HEK293 (cell line): ENCODE measurements at regions of chr16 and their contacts with region 1.

Region 1: GRCh38 chr16:2155091-2156021 is at the start of gene TRAF7:
- H3K4me3 ChIP-seq: peak within 1 kb of the TSS; percentile 77
- H3K27ac ChIP-seq: peak within 1 kb of the TSS; percentile 64
- H3K4me1 ChIP-seq: no peaks in the 10 kb centered on the region
- CTCF ChIP-seq: no peak

Region 2: GRCh38 chr16:1763521-1764511 is 391.5 kb before region 1 on chr16:
- CTCF ChIA-PET with region 1: no interaction called
- POLR2A ChIA-PET with region 1: no interaction called
- H3K4me3 ChIP-seq: no peak overlapping the region
- H3K27ac ChIP-seq: no peak overlapping the region
- H3K4me1 ChIP-seq: no peaks in the 10 kb centered on the region
- CTCF ChIP-seq: peak; percentile 34

Region 3: GRCh38 chr16:1782352-1783091 is 372.8 kb before region 1 on chr16 and contains the starts of genes NUBP2 and SPSB3:
- CTCF ChIA-PET with region 1: no interaction called
- POLR2A ChIA-PET with region 1: interaction called, 15 read pairs
- H3K4me3 ChIP-seq: peak within 1 kb of the TSS; percentile 90
- H3K27ac ChIP-seq: peak within 1 kb of the TSS; percentile 87
- H3K4me1 ChIP-seq: peaks cover 6% of the 10 kb centered on the region
- CTCF ChIP-seq: no peak

Region 4: DNA sequence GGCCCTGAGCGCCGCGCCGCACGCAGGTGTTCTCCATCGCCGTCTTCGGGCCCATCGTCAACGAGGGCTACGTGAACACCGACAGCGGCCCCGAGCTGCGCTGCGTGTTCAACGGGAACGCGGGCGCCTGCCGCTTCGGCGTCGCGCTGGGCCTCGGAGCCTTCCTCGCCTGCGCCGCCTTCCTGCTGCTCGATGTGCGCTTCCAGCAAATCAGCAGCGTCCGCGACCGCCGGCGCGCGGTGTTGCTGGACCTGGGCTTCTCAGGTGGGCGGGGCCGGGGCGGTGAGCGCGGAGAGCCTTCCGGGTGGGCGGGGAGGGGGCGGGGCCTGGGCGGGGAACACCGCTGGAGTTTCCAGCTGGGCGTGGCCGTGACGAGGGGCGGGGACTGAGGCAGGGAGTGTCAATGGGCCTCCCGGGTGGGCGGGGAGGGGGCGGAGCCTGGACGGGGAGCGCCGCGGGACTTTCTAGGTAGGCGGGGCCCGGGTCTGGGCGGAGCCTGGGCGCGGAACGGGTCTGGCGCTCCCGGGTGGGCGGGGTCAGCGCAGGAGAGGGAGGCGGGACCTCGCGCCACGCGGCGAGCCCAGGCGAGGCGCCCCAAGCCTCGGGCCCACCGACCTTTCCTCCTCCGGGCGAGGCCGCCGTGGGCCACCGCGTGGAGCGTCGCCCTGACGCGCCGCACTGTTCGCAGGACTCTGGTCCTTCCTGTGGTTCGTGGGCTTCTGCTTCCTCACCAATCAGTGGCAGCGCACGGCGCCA is 163.2 kb before region 1 on chr16:
- CTCF ChIA-PET with region 1: no interaction called
- POLR2A ChIA-PET with region 1: interaction called, 12 read pairs
- H3K4me3 ChIP-seq: no peak overlapping the region
- H3K27ac ChIP-seq: no peak overlapping the region
- H3K4me1 ChIP-seq: peaks cover 3% of the 10 kb centered on the region
- CTCF ChIP-seq: no peak

Region 5: GRCh38 chr16:2016407-2016922 is 138.9 kb before region 1 on chr16:
- CTCF ChIA-PET with region 1: interaction called, 3 read pairs
- POLR2A ChIA-PET with region 1: interaction called, 20 read pairs
- H3K4me3 ChIP-seq: no peak overlapping the region
- H3K27ac ChIP-seq: no peak overlapping the region
- H3K4me1 ChIP-seq: peaks cover 6% of the 10 kb centered on the region
- CTCF ChIP-seq: peak; percentile 52

Region 6: DNA sequence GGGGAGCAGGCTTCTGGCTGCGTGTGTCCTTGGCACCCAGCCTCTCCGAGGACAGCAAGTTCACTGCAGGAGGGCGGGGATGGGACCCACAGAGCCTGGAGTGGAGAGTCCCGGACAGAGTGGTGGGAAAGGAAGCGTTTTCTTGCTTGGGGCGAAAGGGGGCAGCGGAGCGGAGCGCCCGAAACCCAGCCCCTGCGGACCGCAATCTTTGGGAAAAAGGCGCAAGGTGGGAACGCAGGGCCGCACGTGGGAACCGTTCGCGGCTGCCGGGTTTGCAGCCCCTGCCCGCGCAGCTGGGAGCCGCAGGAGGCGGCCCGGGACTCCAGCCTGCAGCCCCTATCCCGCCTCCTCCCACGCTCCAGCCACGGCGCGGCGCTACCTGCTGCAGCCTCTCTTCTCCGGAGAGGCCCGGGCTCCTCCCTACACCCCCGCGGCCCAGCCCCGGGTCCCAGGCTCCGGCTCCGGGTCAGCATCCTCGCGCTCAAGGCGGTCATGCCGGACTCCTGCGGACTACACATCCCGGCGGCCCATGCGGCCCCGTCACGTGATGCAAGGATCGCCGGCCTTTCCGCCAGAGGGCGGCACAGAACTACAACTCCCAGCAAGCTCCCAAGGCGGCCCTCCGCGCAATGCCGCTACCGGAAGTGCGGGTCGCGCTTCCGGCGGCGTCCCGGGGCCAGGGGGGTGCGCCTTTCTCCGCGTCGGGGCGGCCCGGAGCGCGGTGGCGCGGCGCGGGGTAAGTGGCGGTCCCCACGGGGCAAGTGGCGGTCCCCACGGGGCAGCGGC is 107.8 kb before region 1 on chr16 and contains the starts of genes NTHL1 and TSC2:
- CTCF ChIA-PET with region 1: no interaction called
- POLR2A ChIA-PET with region 1: interaction called, 37 read pairs
- H3K4me3 ChIP-seq: peak within 1 kb of the TSS; percentile 82
- H3K27ac ChIP-seq: peak within 1 kb of the TSS; percentile 58; the same call in 1 of the 2 replicates
- H3K4me1 ChIP-seq: no peaks in the 10 kb centered on the region
- CTCF ChIP-seq: peak; percentile 90

Region 7: GRCh38 chr16:2180962-2181923 is 25.9 kb after region 1 on chr16:
- CTCF ChIA-PET with region 1: no interaction called
- POLR2A ChIA-PET with region 1: interaction called, 13 read pairs
- H3K4me3 ChIP-seq: no peak overlapping the region
- H3K27ac ChIP-seq: no peak overlapping the region
- H3K4me1 ChIP-seq: no peaks in the 10 kb centered on the region
- CTCF ChIP-seq: no peak

Region 8: GRCh38 chr16:2205104-2205966 is 50.0 kb after region 1 on chr16 and contains the start of gene MLST8:
- CTCF ChIA-PET with region 1: no interaction called
- POLR2A ChIA-PET with region 1: interaction called, 20 read pairs
- H3K4me3 ChIP-seq: peak within 1 kb of the TSS; percentile 96
- H3K27ac ChIP-seq: peak within 1 kb of the TSS; percentile 90
- H3K4me1 ChIP-seq: no peaks in the 10 kb centered on the region
- CTCF ChIP-seq: no peak; the same call in 1 of the 2 replicates